ENCODE measurements at regions of chr10 and their contacts with region 1.

Region 1: DNA sequence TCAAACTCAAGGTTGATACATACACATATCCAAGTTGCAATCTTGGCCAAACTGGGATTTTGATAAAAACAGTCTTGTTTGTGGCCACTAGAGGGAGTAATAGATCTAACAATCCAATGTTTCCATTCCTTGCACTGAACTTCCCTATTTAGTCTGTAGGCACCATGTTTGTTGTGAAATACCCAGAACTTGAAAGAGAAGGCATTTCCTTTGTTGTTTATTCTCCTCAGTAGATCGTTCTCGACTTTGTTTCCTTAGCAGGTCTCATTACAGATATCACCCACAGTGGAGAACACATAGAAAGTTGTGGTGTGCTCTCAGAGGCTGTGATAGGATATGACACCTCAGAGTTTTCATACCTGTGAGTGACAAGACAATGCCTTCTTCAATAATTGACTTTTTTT is 70.3 kb upstream of the MXI1 start:
- DNase-seq: peak; percentile 82
- ATAC-seq: peak; percentile 67
- H3K4me3 ChIP-seq: no peak overlapping the region
- H3K4me3 Mint-ChIP-seq: peak overlapping the region; percentile 18
- H3K27ac ChIP-seq: peak overlapping the region; percentile 11 to 58
- H3K27ac Mint-ChIP-seq: peak overlapping the region; percentile 47
- H3K4me1 ChIP-seq: peaks cover 20 to 26% of the 10 kb centered on the region in 2 donors
- H3K4me1 Mint-ChIP-seq: peaks cover 37% of the 10 kb centered on the region
- H3K27me3 ChIP-seq: no peaks in the 10 kb centered on the region
- H3K27me3 Mint-ChIP-seq: no peaks in the 10 kb centered on the region
- CTCF ChIP-seq: peak; percentile 85

Region 2: GRCh38 chr10:110123594-110123993 is 13.6 kb before region 1 on chr10:
- CTCF ChIA-PET with region 1: no interaction called
- POLR2A ChIA-PET with region 1: no interaction called
- intact Hi-C with region 1: no loop called
- DNase-seq: no peak
- ATAC-seq: no peak
- H3K4me3 ChIP-seq: no peak overlapping the region
- H3K4me3 Mint-ChIP-seq: no peak overlapping the region
- H3K27ac ChIP-seq: no peak overlapping the region
- H3K27ac Mint-ChIP-seq: no peak overlapping the region
- H3K4me1 ChIP-seq: no peaks in the 10 kb centered on the region
- H3K4me1 Mint-ChIP-seq: no peaks in the 10 kb centered on the region
- H3K27me3 ChIP-seq: no peaks in the 10 kb centered on the region
- H3K27me3 Mint-ChIP-seq: no peaks in the 10 kb centered on the region
- CTCF ChIP-seq: no peak

Region 3: DNA sequence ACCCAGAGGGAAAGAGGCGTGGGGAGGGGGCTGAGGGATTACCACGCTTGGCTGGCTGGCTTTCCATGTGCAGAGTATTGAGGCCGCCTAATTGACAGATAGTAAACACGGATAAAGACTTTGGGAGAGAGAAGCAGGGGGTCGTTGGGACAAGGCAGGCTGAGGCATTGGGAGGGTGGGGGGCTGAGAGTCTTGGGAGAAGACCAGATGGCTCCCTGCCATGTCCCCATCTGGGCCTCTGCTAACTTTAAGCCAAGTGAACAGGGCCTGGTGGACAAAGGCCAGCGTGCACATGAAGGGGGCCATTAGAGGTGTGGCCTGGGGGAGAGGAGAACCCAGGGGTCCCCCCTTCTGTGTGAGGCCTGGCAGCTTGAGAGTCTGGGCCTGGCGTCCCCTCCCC is 14.8 kb after region 1 on chr10:
- CTCF ChIA-PET with region 1: interaction called, 12 read pairs
- POLR2A ChIA-PET with region 1: no interaction called
- intact Hi-C with region 1: loop called (anchors 2 kb)
- DNase-seq: no peak
- ATAC-seq: no peak
- H3K4me3 ChIP-seq: no peak overlapping the region
- H3K4me3 Mint-ChIP-seq: no peak overlapping the region
- H3K27ac ChIP-seq: no peak overlapping the region
- H3K27ac Mint-ChIP-seq: no peak overlapping the region
- H3K4me1 ChIP-seq: peaks cover 56 to 58% of the 10 kb centered on the region in 2 donors
- H3K4me1 Mint-ChIP-seq: peaks cover 55% of the 10 kb centered on the region
- H3K27me3 ChIP-seq: peaks cover 0 to 41% (median 18%) of the 10 kb centered on the region in 4 experiments
- H3K27me3 Mint-ChIP-seq: peaks cover 27% of the 10 kb centered on the region
- CTCF ChIP-seq: no peak

Region 4: DNA sequence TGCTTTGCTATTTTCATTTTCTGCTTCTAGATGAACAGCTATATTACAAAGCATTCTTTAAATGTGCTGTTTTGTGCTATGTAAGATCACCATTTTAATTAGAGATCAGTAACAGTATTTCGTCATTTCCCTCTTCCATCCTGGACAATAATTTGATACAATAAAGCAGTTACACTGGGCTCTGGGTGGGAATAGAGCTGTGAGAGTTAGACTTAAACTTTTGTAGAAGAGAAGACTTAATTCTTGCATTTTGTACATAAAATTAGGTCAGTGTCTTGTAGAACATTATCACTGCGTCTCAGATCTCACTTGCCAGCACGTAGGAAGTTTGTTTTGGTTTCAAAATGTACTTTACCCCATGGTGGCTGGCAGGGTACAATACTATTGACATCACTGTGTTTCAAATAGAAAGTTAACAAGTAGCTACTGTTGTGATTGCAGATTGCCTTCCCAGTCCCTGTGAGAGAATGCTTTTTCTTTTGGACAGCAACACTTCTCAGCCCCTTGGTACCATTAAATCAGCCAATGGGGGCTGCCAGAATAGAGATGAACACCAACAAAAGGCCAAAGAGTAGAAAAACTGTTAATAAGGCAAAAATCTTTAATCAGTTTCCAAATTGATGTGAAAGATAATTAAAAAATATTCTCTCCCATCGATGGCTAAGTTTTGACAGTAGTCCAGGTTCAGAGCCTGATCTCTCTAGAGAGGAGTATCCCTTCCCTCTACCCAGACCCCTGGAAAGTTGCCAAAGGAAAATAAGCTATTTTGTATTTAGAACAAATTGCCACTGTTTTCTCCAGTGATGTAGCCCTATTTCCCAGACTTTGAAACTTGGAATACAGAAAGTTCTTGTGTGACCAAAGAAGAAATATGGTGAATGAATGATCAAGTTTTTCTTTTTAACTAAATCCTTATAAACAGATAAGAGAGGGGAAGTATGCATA is 132.5 kb after region 1 on chr10:
- CTCF ChIA-PET with region 1: interaction called, 21 read pairs
- POLR2A ChIA-PET with region 1: no interaction called
- intact Hi-C with region 1: no loop called
- DNase-seq: peak; percentile 15
- ATAC-seq: peak; percentile 17
- H3K4me3 ChIP-seq: peak overlapping the region in 1 of 5 experiments; percentile 27
- H3K4me3 Mint-ChIP-seq: peak overlapping the region; percentile 51
- H3K27ac ChIP-seq: peak overlapping the region in 1 of 2 donors; percentile 38
- H3K27ac Mint-ChIP-seq: no peak overlapping the region
- H3K4me1 ChIP-seq: peaks cover 0 to 24% of the 10 kb centered on the region in 2 donors
- H3K4me1 Mint-ChIP-seq: peaks cover 35% of the 10 kb centered on the region
- H3K27me3 ChIP-seq: no peaks in the 10 kb centered on the region
- H3K27me3 Mint-ChIP-seq: no peaks in the 10 kb centered on the region
- CTCF ChIP-seq: no peak

Region 5: DNA sequence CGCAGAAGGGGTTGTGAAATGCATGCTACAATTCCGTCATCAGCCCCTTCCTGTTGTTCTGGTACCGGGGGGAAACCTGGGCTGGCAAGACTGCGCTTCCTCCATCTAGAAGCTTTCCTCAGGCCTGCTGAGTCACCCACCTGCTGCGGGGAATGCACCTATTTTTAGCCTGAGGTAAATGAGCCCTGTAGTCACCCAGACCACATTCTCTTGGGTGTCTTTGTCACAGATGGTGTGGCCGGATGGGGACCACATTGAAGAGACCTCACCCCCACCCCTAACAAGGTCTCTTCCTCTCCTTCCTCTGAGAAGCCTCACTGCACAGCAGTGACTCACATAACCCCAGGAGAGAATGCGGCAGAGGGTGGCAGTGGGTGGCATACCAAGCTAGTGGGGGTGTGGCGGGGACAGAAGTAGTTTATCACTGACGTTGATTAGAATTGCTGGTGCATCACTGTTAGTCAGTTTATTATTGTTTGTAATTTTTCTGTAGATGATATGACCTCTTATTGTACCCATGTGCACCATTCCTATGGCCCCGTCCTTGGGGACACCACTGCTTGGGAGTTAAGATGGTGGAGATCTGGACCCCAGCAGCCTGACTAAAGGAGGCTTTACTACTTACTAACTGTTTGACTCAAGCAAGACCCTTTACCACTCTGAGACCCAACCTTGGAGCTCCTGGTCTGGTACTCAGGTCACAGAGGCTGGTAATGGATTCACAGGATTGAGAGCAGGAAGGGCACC is 277.6 kb after region 1 on chr10:
- CTCF ChIA-PET with region 1: interaction called, 3 read pairs
- POLR2A ChIA-PET with region 1: no interaction called
- intact Hi-C with region 1: loop called (anchors 5 kb)
- DNase-seq: peak; percentile 92
- ATAC-seq: peak; percentile 92
- H3K4me3 ChIP-seq: peak overlapping the region in 1 of 5 experiments; percentile 11
- H3K4me3 Mint-ChIP-seq: peak overlapping the region; percentile 60
- H3K27ac ChIP-seq: no peak overlapping the region
- H3K27ac Mint-ChIP-seq: peak overlapping the region; percentile 76
- H3K4me1 ChIP-seq: peaks cover 57 to 74% of the 10 kb centered on the region in 2 donors
- H3K4me1 Mint-ChIP-seq: peaks cover 69% of the 10 kb centered on the region
- H3K27me3 ChIP-seq: peaks cover 0 to 28% (median 7%) of the 10 kb centered on the region in 4 experiments
- H3K27me3 Mint-ChIP-seq: peaks cover 13% of the 10 kb centered on the region
- CTCF ChIP-seq: no peak

Region 6: DNA sequence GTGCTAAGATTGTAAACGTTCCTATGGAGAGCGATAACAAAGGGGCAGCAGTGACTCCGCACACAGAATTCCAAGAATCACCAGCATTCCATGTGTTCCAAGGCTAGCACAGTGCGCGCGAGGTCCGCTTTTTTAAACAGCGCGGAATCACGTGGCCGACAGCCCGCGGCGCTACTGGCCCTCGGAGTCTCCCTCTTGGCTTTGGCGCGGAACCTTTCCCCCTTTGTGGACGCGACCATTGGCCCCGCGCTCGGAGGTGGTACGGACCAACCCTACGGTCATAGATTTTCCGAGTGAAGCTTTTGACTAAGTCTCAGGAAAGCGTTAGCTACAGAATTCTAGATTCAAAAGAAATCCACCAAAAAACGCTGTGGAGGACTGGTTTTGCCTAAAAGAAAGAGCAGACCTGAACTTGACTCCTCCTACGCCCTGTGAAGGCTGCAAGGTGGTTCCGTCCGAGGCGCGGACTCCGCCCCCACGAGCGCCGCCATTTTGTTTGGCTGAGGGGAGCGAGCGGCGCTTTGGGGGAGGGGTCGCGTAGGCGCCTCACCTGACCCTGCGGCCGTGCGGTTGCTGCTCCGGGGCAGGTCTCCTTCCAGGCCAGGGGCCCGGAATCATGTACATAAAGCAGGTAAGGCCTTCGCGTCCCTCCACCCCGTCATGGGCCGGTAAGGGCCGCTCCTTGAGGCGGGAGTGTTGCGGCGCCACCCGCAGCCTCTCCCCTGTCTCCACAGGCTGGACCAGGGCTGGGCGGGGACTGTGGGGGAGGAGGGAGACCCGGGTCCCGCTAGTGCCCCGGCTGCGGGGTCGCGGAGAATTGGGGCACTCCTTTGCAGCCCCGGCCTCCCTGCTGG is 430.3 kb after region 1 on chr10 and contains the start of gene SMC3:
- CTCF ChIA-PET with region 1: no interaction called
- POLR2A ChIA-PET with region 1: no interaction called
- intact Hi-C with region 1: loop called (anchors 1 kb)
- DNase-seq: peak; percentile 98
- ATAC-seq: peak; percentile 89
- H3K4me3 ChIP-seq: peak within 1 kb of the TSS; percentile 82 to 92 (median 90)
- H3K4me3 Mint-ChIP-seq: peak within 1 kb of the TSS; percentile 91
- H3K27ac ChIP-seq: peak within 1 kb of the TSS; percentile 73 to 90
- H3K27ac Mint-ChIP-seq: peak within 1 kb of the TSS; percentile 98
- H3K4me1 ChIP-seq: peaks cover 24 to 27% of the 10 kb centered on the region in 2 donors
- H3K4me1 Mint-ChIP-seq: peaks cover 31% of the 10 kb centered on the region
- H3K27me3 ChIP-seq: peaks cover 0 to 8% (median 5%) of the 10 kb centered on the region in 4 experiments
- H3K27me3 Mint-ChIP-seq: peaks cover 5% of the 10 kb centered on the region
- CTCF ChIP-seq: no peak
- total RNA-seq, gene SMC3: 44.6 and 45.8 TPM in 2 replicates